ENCODE measurements at regions of chr6 and their contacts with region 1.

Region 1: DNA sequence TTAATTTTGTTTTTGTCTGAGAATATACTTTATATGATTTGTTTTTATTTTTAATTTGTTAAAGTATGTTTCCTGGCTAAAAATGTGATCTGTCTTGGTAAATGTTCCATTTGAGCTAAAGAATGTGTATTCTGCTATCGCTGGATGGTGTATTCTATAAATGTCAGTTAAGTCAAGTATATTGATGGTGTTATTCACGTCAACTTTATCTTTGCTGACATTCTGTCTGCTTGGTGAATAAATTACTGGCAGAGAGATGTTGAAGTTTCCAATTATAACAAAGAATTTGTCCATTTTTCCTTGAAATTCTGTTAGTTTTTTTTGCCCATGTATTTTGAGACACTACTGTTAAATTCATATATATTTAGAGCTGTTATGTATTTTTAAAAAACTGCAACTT is 1131.8 kb upstream of the GJE1 start:
- DNase-seq: no peak
- ATAC-seq: no peak
- H3K4me3 ChIP-seq: no peak overlapping the region
- H3K27ac ChIP-seq: no peak overlapping the region
- H3K4me1 ChIP-seq: no peaks in the 10 kb centered on the region
- H3K27me3 ChIP-seq: no peaks in the 10 kb centered on the region
- CTCF ChIP-seq: no peak
- EP300 ChIP-seq: no peak
- POLR2A ChIP-seq: no peak
- RAD21 ChIP-seq: no peak

Region 2: DNA sequence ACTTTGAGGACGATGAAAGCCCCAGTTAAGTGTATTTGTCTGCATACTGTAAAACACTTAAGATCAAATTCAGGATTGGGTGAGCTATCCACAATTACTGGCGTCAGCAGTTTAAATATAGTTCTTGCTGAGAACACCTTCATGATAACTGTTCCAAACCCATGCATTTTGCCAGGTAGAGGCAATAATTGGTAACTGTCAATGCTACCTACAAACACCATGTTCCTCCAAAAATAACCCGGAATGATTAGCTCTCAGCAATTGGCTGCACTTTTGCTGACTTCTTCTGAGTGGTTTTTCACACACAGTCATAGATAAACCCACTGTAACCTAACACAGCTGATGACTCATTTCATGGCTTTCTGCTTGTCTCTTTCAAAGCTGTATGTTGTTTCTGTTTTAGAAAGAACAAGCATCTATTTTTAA is 226.8 kb before region 1 on chr6:
- CTCF ChIA-PET with region 1: no interaction called
- POLR2A ChIA-PET with region 1: no interaction called
- in situ Hi-C with region 1: no loop called
- intact Hi-C with region 1: no loop called
- DNase-seq: no peak
- ATAC-seq: no peak
- H3K4me3 ChIP-seq: no peak overlapping the region
- H3K27ac ChIP-seq: no peak overlapping the region
- H3K4me1 ChIP-seq: no peaks in the 10 kb centered on the region
- H3K27me3 ChIP-seq: no peaks in the 10 kb centered on the region
- CTCF ChIP-seq: no peak
- EP300 ChIP-seq: no peak
- POLR2A ChIP-seq: no peak
- RAD21 ChIP-seq: no peak

Region 3: GRCh38 chr6:140988780-140989179 is 12.1 kb before region 1 on chr6:
- CTCF ChIA-PET with region 1: no interaction called
- POLR2A ChIA-PET with region 1: no interaction called
- in situ Hi-C with region 1: no loop called
- intact Hi-C with region 1: loop called (anchors 2 kb)
- DNase-seq: no peak
- ATAC-seq: no peak
- H3K4me3 ChIP-seq: no peak overlapping the region
- H3K27ac ChIP-seq: no peak overlapping the region
- H3K4me1 ChIP-seq: no peaks in the 10 kb centered on the region
- H3K27me3 ChIP-seq: no peaks in the 10 kb centered on the region
- CTCF ChIP-seq: no peak
- EP300 ChIP-seq: no peak
- POLR2A ChIP-seq: no peak
- RAD21 ChIP-seq: no peak

Region 4: DNA sequence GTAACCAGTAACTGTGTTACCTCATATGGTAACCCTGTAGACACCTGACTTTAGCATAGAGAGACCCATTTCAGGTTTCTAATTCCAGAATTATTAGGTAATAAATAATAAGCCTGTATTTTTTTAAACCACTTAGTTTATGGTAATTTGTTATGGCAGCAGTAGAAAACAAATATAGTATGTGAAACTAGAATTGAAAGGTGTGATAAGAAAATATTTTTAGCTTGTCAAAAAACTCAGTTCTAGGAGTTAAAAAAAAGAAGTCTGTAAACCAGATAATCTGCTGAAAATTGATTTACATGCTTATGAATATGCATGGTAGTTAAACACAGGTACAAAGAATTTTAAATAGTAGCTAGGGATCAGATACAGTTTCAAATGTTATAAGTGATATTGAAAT is 436.8 kb after region 1 on chr6:
- CTCF ChIA-PET with region 1: no interaction called
- POLR2A ChIA-PET with region 1: no interaction called
- in situ Hi-C with region 1: no loop called
- intact Hi-C with region 1: no loop called
- DNase-seq: no peak
- ATAC-seq: no peak
- H3K4me3 ChIP-seq: no peak overlapping the region
- H3K27ac ChIP-seq: no peak overlapping the region
- H3K4me1 ChIP-seq: no peaks in the 10 kb centered on the region
- H3K27me3 ChIP-seq: no peaks in the 10 kb centered on the region
- CTCF ChIP-seq: no peak
- EP300 ChIP-seq: no peak
- POLR2A ChIP-seq: no peak
- RAD21 ChIP-seq: no peak

Measured in HepG2 (cell line).